ENCODE measurements at regions of chr4 and their contacts with region 1.

Region 1: DNA sequence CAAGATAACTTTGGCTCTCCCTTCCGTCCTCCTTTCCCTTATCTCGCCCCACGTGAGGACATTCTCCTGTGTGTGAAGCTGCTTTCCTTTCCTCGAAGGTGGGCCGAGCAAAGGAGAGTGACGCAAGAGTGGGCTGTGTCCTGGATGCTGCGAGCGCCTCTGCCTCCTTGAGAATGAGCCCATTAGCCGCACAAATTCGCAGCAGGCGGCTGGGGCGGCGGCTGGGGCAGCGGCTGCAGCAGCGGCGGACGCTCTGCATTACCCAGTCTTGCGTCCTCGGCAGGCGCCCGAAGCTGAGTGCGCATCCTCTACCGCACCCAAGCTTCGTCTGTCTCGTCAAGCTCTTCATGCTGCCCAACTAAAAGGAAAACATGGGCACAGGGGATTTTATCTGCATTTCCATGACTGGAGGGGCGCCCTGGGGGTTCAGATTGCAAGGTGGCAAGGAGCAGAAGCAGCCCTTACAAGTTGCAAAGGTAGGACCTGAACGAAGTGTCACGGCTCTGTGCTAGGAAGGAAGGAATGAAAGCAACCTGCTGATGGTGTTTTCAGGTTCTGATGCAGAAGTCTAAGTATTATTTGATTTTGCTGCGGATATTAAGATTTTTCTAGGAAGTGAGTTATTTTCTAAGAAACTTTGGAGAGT is at the start of gene SYNPO2:
- DNase-seq: peak in 2 of 4 experiments; percentile 14 to 53
- ATAC-seq: peak; percentile 91
- H3K4me3 ChIP-seq: no peak within 1 kb of the TSS
- H3K27ac ChIP-seq: no peak within 1 kb of the TSS
- H3K4me1 ChIP-seq: peaks cover 3 to 6% of the 10 kb centered on the region in 2 experiments; a peak in 3 of 5 replicates
- H3K27me3 ChIP-seq: peaks cover 0 to 11% of the 10 kb centered on the region in 2 experiments; a peak in 4 of 5 replicates
- CTCF ChIP-seq: no peak
- EP300 ChIP-seq: no peak
- POLR2A ChIP-seq: no peak
- RAD21 ChIP-seq: no peak
- polyA plus RNA-seq, gene SYNPO2: not detected

Region 2: GRCh38 chr4:118684873-118685811 is 203.6 kb before region 1 on chr4 and contains the start of gene METTL14:
- CTCF ChIA-PET with region 1: no interaction called
- POLR2A ChIA-PET with region 1: no interaction called
- in situ Hi-C with region 1: no loop called
- intact Hi-C with region 1: loop called (anchors 1 kb)
- DNase-seq: peak; percentile 82 to 96 (median 84)
- ATAC-seq: peak; percentile 97
- H3K4me3 ChIP-seq: peak within 1 kb of the TSS; percentile 63
- H3K27ac ChIP-seq: peak within 1 kb of the TSS; percentile 93
- H3K4me1 ChIP-seq: peaks cover 3 to 9% of the 10 kb centered on the region in 2 experiments; a peak in 3 of 5 replicates
- H3K27me3 ChIP-seq: no peaks in the 10 kb centered on the region
- CTCF ChIP-seq: no peak
- EP300 ChIP-seq: no peak
- POLR2A ChIP-seq: peak; percentile 94
- RAD21 ChIP-seq: no peak
- polyA plus RNA-seq, gene METTL14: 16.7 to 27.2 TPM

Region 3: GRCh38 chr4:118740869-118741268 is 147.9 kb before region 1 on chr4:
- CTCF ChIA-PET with region 1: interaction called, 4 read pairs
- POLR2A ChIA-PET with region 1: no interaction called
- in situ Hi-C with region 1: no loop called
- intact Hi-C with region 1: loop called (anchors 1 kb)
- DNase-seq: peak in 3 of 4 experiments; percentile 16 to 18 (median 17)
- ATAC-seq: no peak
- H3K4me3 ChIP-seq: no peak overlapping the region
- H3K27ac ChIP-seq: no peak overlapping the region
- H3K4me1 ChIP-seq: no peaks in the 10 kb centered on the region
- H3K27me3 ChIP-seq: no peaks in the 10 kb centered on the region
- CTCF ChIP-seq: peak in 1 of 3 experiments; percentile 47; a peak in 2 of 6 replicates
- EP300 ChIP-seq: no peak
- POLR2A ChIP-seq: no peak
- RAD21 ChIP-seq: peak; percentile 43 to 44

Region 4: GRCh38 chr4:118772081-118772766 is 116.6 kb before region 1 on chr4:
- CTCF ChIA-PET with region 1: interaction called, 23 read pairs
- POLR2A ChIA-PET with region 1: no interaction called
- in situ Hi-C with region 1: no loop called
- intact Hi-C with region 1: loop called (anchors 1 kb)
- DNase-seq: peak in 3 of 4 experiments; percentile 12 to 44 (median 44)
- ATAC-seq: peak; percentile 84
- H3K4me3 ChIP-seq: no peak overlapping the region
- H3K27ac ChIP-seq: no peak overlapping the region
- H3K4me1 ChIP-seq: peaks cover 0 to under 1% of the 10 kb centered on the region in 2 experiments; a peak in 2 of 5 replicates
- H3K27me3 ChIP-seq: no peaks in the 10 kb centered on the region
- CTCF ChIP-seq: peak in 2 of 3 experiments; percentile 43 to 69; a peak in 3 of 6 replicates
- EP300 ChIP-seq: no peak
- POLR2A ChIP-seq: no peak
- RAD21 ChIP-seq: peak; percentile 63 to 70

Region 5: GRCh38 chr4:118865091-118865708 is 23.6 kb before region 1 on chr4:
- CTCF ChIA-PET with region 1: no interaction called
- POLR2A ChIA-PET with region 1: no interaction called
- in situ Hi-C with region 1: no loop called
- intact Hi-C with region 1: loop called (anchors 1 kb)
- DNase-seq: peak in 2 of 4 experiments; percentile 26 to 31
- ATAC-seq: peak; percentile 82
- H3K4me3 ChIP-seq: no peak overlapping the region
- H3K27ac ChIP-seq: no peak overlapping the region
- H3K4me1 ChIP-seq: no peaks in the 10 kb centered on the region; a peak in 1 of 5 replicates
- H3K27me3 ChIP-seq: peaks cover 0 to 7% of the 10 kb centered on the region in 2 experiments; a peak in 3 of 5 replicates
- CTCF ChIP-seq: peak; percentile 42 to 59 (median 57)
- EP300 ChIP-seq: no peak
- POLR2A ChIP-seq: no peak
- RAD21 ChIP-seq: peak in 1 of 2 experiments; percentile 42; a peak in 1 of 4 replicates